CD14-positive monocyte (primary cell): ENCODE measurements at regions of chr17 and their contacts with region 1.

Region 1: GRCh38 chr17:44014437-44015172 is at the start of gene TMEM101:
- DNase-seq: peak; percentile 91 to 93 (median 93)
- H3K4me3 ChIP-seq: peak within 1 kb of the TSS; percentile 63 to 98 (median 87)
- H3K4me3 Mint-ChIP-seq: peak within 1 kb of the TSS; percentile 97 to 100
- H3K27ac ChIP-seq: peak within 1 kb of the TSS in 1 of 2 donors; percentile 91
- H3K27ac Mint-ChIP-seq: peak within 1 kb of the TSS; percentile 82 to 97 (median 91)
- H3K4me1 ChIP-seq: peaks cover 12 to 17% of the 10 kb centered on the region in 2 donors
- H3K4me1 Mint-ChIP-seq: peaks cover 23% of the 10 kb centered on the region
- H3K27me3 ChIP-seq: no peaks in the 10 kb centered on the region
- H3K27me3 Mint-ChIP-seq: peaks cover 0 to 2% (median 0%) of the 10 kb centered on the region in 3 donors
- CTCF ChIP-seq: no peak
- polyA plus RNA-seq, gene TMEM101: 17.3 to 41.4 (median 33.6) TPM

Region 2: GRCh38 chr17:44070455-44071197 is 56.0 kb after region 1 on chr17 and contains the start of gene G6PC3:
- intact Hi-C with region 1: loop called (anchors 2 to 5 kb)
- DNase-seq: peak; percentile 87 to 92 (median 89)
- H3K4me3 ChIP-seq: peak within 1 kb of the TSS; percentile 45 to 84 (median 65)
- H3K4me3 Mint-ChIP-seq: peak within 1 kb of the TSS; percentile 89 to 94
- H3K27ac ChIP-seq: peak within 1 kb of the TSS; percentile 86
- H3K27ac Mint-ChIP-seq: peak within 1 kb of the TSS; percentile 87 to 97 (median 94)
- H3K4me1 ChIP-seq: peaks cover 46 to 56% of the 10 kb centered on the region in 2 donors
- H3K4me1 Mint-ChIP-seq: peaks cover 49% of the 10 kb centered on the region
- H3K27me3 ChIP-seq: no peaks in the 10 kb centered on the region
- H3K27me3 Mint-ChIP-seq: peaks cover 0 to 1% (median 0%) of the 10 kb centered on the region in 3 donors
- CTCF ChIP-seq: no peak
- polyA plus RNA-seq, gene G6PC3: 38.0 to 46.4 (median 42.4) TPM